ENCODE measurements at regions of chr5 and their contacts with region 1.

Region 1: DNA sequence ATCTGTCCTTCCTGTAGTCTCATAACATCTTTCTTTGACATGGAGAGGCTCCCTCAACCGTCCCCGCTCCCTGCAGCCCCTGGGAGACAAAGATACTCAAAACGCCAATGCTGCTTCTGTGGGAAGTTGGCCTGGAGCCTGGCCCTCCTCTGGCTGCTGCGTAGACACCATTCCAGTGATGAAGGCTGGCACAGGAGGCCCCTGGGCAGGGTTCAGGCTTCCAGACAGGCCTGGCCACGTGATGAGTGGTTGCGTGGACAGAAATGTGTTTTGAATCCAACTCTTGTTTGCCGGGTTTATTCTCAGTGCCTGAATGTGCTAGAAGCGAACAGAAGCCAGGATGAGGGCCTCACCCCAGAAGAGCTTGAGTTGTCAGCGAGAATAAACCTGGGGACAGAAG is 43.2 kb upstream of the NKX2-5 start:
- DNase-seq: no peak
- H3K4me3 ChIP-seq: no peak overlapping the region
- H3K27ac ChIP-seq: no peak overlapping the region
- H3K4me1 ChIP-seq: no peaks in the 10 kb centered on the region
- CTCF ChIP-seq: no peak

Region 2: GRCh38 chr5:173420108-173420507 is 141.9 kb after region 1 on chr5:
- CTCF ChIA-PET with region 1: no interaction called
- POLR2A ChIA-PET with region 1: no interaction called
- intact Hi-C with region 1: no loop called
- DNase-seq: no peak
- H3K4me3 ChIP-seq: no peak overlapping the region
- H3K27ac ChIP-seq: no peak overlapping the region
- H3K4me1 ChIP-seq: no peaks in the 10 kb centered on the region
- CTCF ChIP-seq: no peak

Region 3: GRCh38 chr5:173659423-173659822 is 381.3 kb after region 1 on chr5:
- CTCF ChIA-PET with region 1: no interaction called
- POLR2A ChIA-PET with region 1: no interaction called
- intact Hi-C with region 1: loop called (anchors 5 kb)
- DNase-seq: no peak
- H3K4me3 ChIP-seq: no peak overlapping the region
- H3K27ac ChIP-seq: no peak overlapping the region
- H3K4me1 ChIP-seq: peaks cover 9% of the 10 kb centered on the region
- CTCF ChIP-seq: no peak

Measured in OCI-LY7 (cell line).